GM12878 (cell line): ENCODE measurements at regions of chr16 and their contacts with region 1.

Region 1: DNA sequence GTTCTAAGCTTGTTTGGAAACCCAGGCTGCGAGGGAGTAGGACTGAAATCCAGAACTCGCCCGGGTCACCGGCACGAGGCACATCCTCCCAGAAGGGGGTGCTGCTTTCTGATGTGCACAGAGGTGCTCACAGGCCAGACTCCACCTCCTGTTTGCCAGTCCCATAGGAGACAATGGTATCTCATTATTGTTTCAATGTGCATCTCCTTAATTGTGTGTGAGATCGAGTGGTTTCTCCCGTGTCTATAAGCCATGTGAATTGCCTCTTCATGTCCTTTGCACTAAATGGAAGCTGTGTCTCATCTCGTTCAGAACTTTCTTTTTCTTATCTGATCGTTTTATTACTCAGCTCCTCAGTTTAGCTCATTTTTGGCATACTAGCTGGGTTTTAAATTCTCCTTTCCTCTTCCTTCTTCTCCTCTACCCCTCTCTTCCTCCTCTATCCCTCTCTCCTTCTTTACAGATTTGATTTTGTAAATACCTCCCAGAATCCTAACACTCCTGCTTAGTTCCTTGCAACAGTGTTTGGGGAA is 32.1 kb upstream of the PRKCB start:
- DNase-seq: no peak
- ATAC-seq: peak; percentile 98
- H3K4me3 ChIP-seq: no peak overlapping the region
- H3K27ac ChIP-seq: no peak overlapping the region
- H3K4me1 ChIP-seq: peaks cover 20% of the 10 kb centered on the region
- H3K27me3 ChIP-seq: no peaks in the 10 kb centered on the region
- CTCF ChIP-seq: peak; percentile 87 to 92 (median 88); a peak in 5 of 6 replicates
- EP300 ChIP-seq: no peak
- POLR2A ChIP-seq: no peak
- RAD21 ChIP-seq: peak; percentile 84

Region 2: GRCh38 chr16:23544436-23544835 is 259.2 kb before region 1 on chr16:
- CTCF ChIA-PET with region 1: no interaction called
- POLR2A ChIA-PET with region 1: no interaction called
- RAD21 ChIA-PET with region 1: no interaction called
- SMC1A ChIA-PET with region 1: no interaction called
- in situ Hi-C with region 1: no loop called
- intact Hi-C with region 1: no loop called
- DNase-seq: no peak
- ATAC-seq: no peak
- H3K4me3 ChIP-seq: no peak overlapping the region
- H3K27ac ChIP-seq: no peak overlapping the region
- H3K4me1 ChIP-seq: no peaks in the 10 kb centered on the region
- H3K27me3 ChIP-seq: no peaks in the 10 kb centered on the region
- CTCF ChIP-seq: no peak
- EP300 ChIP-seq: no peak
- POLR2A ChIP-seq: no peak
- RAD21 ChIP-seq: no peak

Region 3: GRCh38 chr16:23556881-23557778 is 246.5 kb before region 1 on chr16 and contains the starts of genes EARS2 and UBFD1:
- CTCF ChIA-PET with region 1: no interaction called
- POLR2A ChIA-PET with region 1: no interaction called
- RAD21 ChIA-PET with region 1: no interaction called
- SMC1A ChIA-PET with region 1: no interaction called
- in situ Hi-C with region 1: no loop called
- intact Hi-C with region 1: no loop called
- DNase-seq: peak; percentile 95
- ATAC-seq: peak; percentile 94
- H3K4me3 ChIP-seq: peak within 1 kb of the TSS; percentile 92
- H3K27ac ChIP-seq: peak within 1 kb of the TSS; percentile 95
- H3K4me1 ChIP-seq: no peaks in the 10 kb centered on the region; the same call in none of the 2 replicates
- H3K27me3 ChIP-seq: no peaks in the 10 kb centered on the region
- CTCF ChIP-seq: peak; percentile 95 to 97 (median 96); a peak in 5 of 6 replicates
- EP300 ChIP-seq: no peak; a peak in 1 of 4 replicates
- POLR2A ChIP-seq: peak; percentile 91
- RAD21 ChIP-seq: peak; percentile 51; the same call in 1 of the 2 replicates
- polyA plus RNA-seq, gene EARS2: 12.9 to 27.0 TPM
- polyA plus RNA-seq, gene UBFD1: 7.3 to 7.9 TPM

Region 4: GRCh38 chr16:23784811-23785447 is 18.7 kb before region 1 on chr16:
- CTCF ChIA-PET with region 1: interaction called, 4 read pairs
- POLR2A ChIA-PET with region 1: interaction called, 10 read pairs
- RAD21 ChIA-PET with region 1: no interaction called
- SMC1A ChIA-PET with region 1: interaction called, 6 read pairs
- in situ Hi-C with region 1: no loop called
- intact Hi-C with region 1: no loop called
- DNase-seq: no peak
- ATAC-seq: no peak
- H3K4me3 ChIP-seq: no peak overlapping the region
- H3K27ac ChIP-seq: no peak overlapping the region
- H3K4me1 ChIP-seq: no peaks in the 10 kb centered on the region
- H3K27me3 ChIP-seq: no peaks in the 10 kb centered on the region; a peak in 1 of 4 replicates
- CTCF ChIP-seq: no peak
- EP300 ChIP-seq: no peak
- POLR2A ChIP-seq: no peak
- RAD21 ChIP-seq: no peak

Region 5: DNA sequence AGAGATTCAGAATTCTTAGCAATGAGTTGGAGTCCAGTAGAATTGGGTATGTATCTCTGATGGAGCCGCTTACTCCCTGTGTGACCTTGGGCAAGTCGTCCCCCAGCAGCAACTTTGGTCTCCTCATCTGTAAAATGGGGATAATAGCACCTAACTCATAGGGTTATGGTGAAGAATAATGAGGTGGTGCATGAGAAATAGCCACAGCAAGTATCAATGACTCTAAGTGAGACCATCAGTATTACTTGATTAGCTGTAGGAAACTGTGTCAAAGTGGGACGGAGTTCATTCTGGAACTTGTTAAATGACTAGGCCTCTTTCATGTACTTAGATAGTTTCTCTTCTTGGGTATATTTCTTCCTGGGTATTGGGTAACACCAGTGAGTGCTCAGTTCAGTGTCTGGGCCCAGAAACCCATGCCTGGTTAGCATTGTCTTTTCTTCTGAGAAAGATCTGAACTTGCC is 38.5 kb after region 1 on chr16:
- CTCF ChIA-PET with region 1: interaction called, 30 read pairs
- POLR2A ChIA-PET with region 1: no interaction called
- RAD21 ChIA-PET with region 1: interaction called, 37 read pairs
- SMC1A ChIA-PET with region 1: interaction called, 89 read pairs
- in situ Hi-C with region 1: no loop called
- intact Hi-C with region 1: no loop called
- DNase-seq: peak; percentile 96
- ATAC-seq: peak; percentile 76
- H3K4me3 ChIP-seq: peak overlapping the region; percentile 58; the same call in 1 of the 2 replicates
- H3K27ac ChIP-seq: peak overlapping the region; percentile 80
- H3K4me1 ChIP-seq: peaks cover 40% of the 10 kb centered on the region
- H3K27me3 ChIP-seq: no peaks in the 10 kb centered on the region
- CTCF ChIP-seq: no peak
- EP300 ChIP-seq: peak; percentile 82 to 95
- POLR2A ChIP-seq: no peak
- RAD21 ChIP-seq: 0 out of 2 replicates have a peak, but pooled peaks have one; percentile 21

Region 6: DNA sequence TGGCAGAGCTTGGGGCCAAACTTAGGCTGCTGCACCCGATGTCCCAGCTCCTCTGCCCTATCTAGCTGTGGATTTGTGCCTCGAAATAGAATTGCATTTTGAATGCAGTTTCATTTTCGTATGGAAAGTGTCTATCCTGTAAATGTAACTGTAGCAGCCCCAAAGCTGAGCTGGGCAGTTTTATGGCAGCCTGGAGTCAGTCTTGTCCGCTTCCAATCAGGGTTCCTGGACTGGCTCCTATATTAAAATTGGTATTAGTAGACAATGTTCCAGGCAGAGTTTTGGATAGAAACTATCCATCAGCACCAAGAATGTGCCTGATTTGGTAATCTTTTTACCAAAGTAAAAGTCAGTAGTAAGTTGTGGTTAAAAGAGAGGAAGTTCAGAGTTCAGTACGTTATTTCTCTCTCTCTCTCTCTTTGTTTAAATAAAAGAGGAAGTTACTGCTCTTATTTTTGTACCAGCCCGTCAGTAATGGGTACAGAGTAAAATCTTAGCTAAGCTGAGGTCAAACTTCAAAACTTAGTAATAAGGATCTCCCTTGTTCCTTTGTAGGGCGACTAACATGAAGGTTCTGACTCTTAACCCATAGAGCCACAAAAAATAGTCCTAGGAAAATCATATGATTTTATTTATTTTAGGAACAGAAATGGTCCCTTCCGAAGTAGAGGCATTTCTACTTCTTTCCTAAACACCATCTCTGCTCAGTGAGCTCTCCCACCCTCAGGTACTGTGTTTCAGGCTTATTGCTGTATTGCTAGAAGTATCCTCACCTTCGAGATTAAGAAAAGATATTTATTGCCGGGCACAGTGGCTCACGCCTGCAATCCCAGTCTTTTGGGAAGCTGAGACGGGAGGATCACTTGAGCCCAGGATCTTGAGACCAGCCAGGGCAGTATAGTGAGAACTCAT is 60.1 kb after region 1 on chr16:
- CTCF ChIA-PET with region 1: interaction called, 48 read pairs
- POLR2A ChIA-PET with region 1: interaction called, 5 read pairs
- RAD21 ChIA-PET with region 1: interaction called, 15 read pairs
- SMC1A ChIA-PET with region 1: interaction called, 85 read pairs
- in situ Hi-C with region 1: no loop called
- intact Hi-C with region 1: no loop called
- DNase-seq: no peak
- ATAC-seq: peak; percentile 85
- H3K4me3 ChIP-seq: peak overlapping the region; percentile 55
- H3K27ac ChIP-seq: peak overlapping the region; percentile 98
- H3K4me1 ChIP-seq: peaks cover 62% of the 10 kb centered on the region
- H3K27me3 ChIP-seq: no peaks in the 10 kb centered on the region
- CTCF ChIP-seq: no peak
- EP300 ChIP-seq: peak; percentile 85 to 95
- POLR2A ChIP-seq: 0 out of 2 replicates have a peak, but pooled peaks have one; percentile 22
- RAD21 ChIP-seq: no peak

Region 7: GRCh38 chr16:23917621-23918020 is 114.0 kb after region 1 on chr16:
- CTCF ChIA-PET with region 1: interaction called, 10 read pairs
- POLR2A ChIA-PET with region 1: no interaction called
- RAD21 ChIA-PET with region 1: interaction called, 3 read pairs
- SMC1A ChIA-PET with region 1: interaction called, 9 read pairs
- in situ Hi-C with region 1: no loop called
- intact Hi-C with region 1: no loop called
- DNase-seq: peak; percentile 76
- ATAC-seq: peak; percentile 79
- H3K4me3 ChIP-seq: peak overlapping the region; percentile 31; the same call in 1 of the 2 replicates
- H3K27ac ChIP-seq: peak overlapping the region; percentile 67
- H3K4me1 ChIP-seq: peaks cover 36% of the 10 kb centered on the region
- H3K27me3 ChIP-seq: no peaks in the 10 kb centered on the region
- CTCF ChIP-seq: no peak
- EP300 ChIP-seq: peak; percentile 53 to 66; a peak in 2 of 4 replicates
- POLR2A ChIP-seq: no peak
- RAD21 ChIP-seq: peak; percentile 18; the same call in 1 of the 2 replicates

Region 8: DNA sequence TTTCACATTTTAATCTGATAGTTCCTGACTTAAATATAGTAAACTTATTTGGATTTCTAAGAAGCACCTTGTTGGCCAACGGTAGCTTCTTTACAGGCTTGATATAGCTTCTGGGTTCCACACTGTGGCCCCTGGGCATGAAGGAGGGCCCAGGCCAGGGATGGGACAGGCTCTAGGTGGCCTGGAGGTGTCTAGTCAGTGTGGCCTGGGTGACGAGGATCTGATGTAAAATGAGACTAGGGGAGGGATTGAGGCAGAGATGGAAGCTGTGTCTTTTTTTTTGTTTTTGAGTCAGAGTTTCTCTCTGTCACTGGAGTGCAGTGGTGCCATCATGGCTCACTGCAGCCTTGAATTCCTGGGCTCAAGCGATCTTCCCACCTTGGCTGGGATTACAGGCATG is 219.1 kb after region 1 on chr16:
- CTCF ChIA-PET with region 1: interaction called, 19 read pairs
- POLR2A ChIA-PET with region 1: no interaction called
- RAD21 ChIA-PET with region 1: interaction called, 5 read pairs
- SMC1A ChIA-PET with region 1: interaction called, 237 read pairs
- in situ Hi-C with region 1: no loop called
- intact Hi-C with region 1: no loop called
- DNase-seq: no peak
- ATAC-seq: peak; percentile 52
- H3K4me3 ChIP-seq: no peak overlapping the region
- H3K27ac ChIP-seq: peak overlapping the region; percentile 5; the same call in 1 of the 2 replicates
- H3K4me1 ChIP-seq: peaks cover 30% of the 10 kb centered on the region
- H3K27me3 ChIP-seq: no peaks in the 10 kb centered on the region
- CTCF ChIP-seq: no peak
- EP300 ChIP-seq: no peak
- POLR2A ChIP-seq: no peak
- RAD21 ChIP-seq: no peak

Region 9: GRCh38 chr16:24070851-24071250 is 267.2 kb after region 1 on chr16:
- CTCF ChIA-PET with region 1: interaction called, 5 read pairs
- POLR2A ChIA-PET with region 1: no interaction called
- RAD21 ChIA-PET with region 1: interaction called, 10 read pairs
- SMC1A ChIA-PET with region 1: interaction called, 6 read pairs
- in situ Hi-C with region 1: no loop called
- intact Hi-C with region 1: no loop called
- DNase-seq: peak; percentile 9
- ATAC-seq: peak; percentile 82
- H3K4me3 ChIP-seq: no peak overlapping the region
- H3K27ac ChIP-seq: no peak overlapping the region
- H3K4me1 ChIP-seq: peaks cover 17% of the 10 kb centered on the region
- H3K27me3 ChIP-seq: no peaks in the 10 kb centered on the region
- CTCF ChIP-seq: peak; percentile 60 to 71 (median 62)
- EP300 ChIP-seq: no peak
- POLR2A ChIP-seq: no peak
- RAD21 ChIP-seq: peak; percentile 63